ENCODE measurements at regions of chr1 and their contacts with region 1.

Region 1: DNA sequence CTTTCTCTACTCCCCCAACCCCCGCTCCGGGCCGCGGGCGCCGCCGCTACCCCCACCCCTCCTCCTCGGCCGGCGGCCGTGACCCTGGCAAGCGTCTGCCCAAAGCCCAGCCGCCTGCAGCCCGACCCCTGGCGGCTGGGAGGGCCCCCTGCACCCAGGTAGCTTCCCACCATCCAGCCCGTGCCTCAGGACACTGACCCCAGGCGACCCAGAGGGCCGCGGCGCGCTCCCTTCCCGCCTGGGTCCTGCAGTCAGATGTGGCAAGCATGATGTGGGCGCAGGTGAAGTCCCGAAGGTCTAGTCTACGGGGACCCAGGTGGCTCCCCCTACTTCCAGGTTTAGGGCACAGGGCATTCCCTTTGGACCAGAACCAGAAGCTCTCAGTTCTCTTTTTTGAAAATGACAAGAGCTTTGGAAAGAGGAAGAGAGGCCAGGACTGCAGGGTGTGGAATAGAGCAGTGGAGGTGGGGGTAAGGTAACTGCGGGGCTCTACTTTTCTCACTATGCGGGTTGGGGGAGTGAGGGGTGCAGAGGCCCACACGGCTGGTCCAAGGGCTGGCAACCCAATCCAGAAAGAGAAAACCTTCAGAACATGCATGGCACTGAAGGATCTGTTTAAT is at the start of gene DENND4B:
- DNase-seq: peak; percentile 88
- H3K4me3 Mint-ChIP-seq: peak within 1 kb of the TSS; percentile 90
- H3K27ac Mint-ChIP-seq: peak within 1 kb of the TSS; percentile 88
- H3K4me1 Mint-ChIP-seq: peaks cover 21% of the 10 kb centered on the region
- H3K27me3 Mint-ChIP-seq: no peaks in the 10 kb centered on the region
- CTCF ChIP-seq: peak; percentile 98
- total RNA-seq, gene DENND4B: 59.6 and 79.1 TPM in 2 replicates

Region 2: DNA sequence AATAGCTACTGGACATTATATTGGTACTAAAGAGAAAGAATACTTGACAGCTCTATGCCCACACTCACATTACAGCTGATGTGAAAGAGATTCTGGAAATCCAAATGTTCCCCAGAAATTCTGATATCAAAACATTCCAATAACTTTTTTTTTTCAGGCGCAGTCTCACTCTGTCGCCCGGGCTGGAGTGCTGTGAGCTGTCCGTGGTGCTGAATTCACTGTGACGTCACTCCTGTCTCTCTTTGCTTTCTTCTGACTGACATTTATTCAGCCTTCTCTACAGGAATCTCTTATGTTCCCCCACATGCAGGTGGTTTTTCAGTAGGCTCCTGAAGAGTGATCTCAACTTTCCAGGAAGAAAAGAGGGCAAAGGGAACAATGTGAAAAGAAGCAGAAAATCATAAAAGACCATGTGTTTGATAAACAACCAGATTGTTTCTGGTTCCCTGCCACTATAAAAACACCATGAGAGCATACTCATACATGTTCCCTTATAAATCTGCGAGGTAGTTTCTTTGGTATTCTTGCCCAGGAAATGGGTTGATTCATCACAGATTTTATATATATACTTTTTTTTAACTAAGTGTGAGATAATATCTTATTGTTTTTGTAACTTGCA is 524.2 kb before region 1 on chr1:
- CTCF ChIA-PET with region 1: no interaction called
- POLR2A ChIA-PET with region 1: no interaction called
- intact Hi-C with region 1: no loop called
- DNase-seq: peak; percentile 84
- H3K4me3 Mint-ChIP-seq: no peak overlapping the region
- H3K27ac Mint-ChIP-seq: no peak overlapping the region
- H3K4me1 Mint-ChIP-seq: no peaks in the 10 kb centered on the region
- H3K27me3 Mint-ChIP-seq: peaks cover 86% of the 10 kb centered on the region
- CTCF ChIP-seq: no peak

Region 3: DNA sequence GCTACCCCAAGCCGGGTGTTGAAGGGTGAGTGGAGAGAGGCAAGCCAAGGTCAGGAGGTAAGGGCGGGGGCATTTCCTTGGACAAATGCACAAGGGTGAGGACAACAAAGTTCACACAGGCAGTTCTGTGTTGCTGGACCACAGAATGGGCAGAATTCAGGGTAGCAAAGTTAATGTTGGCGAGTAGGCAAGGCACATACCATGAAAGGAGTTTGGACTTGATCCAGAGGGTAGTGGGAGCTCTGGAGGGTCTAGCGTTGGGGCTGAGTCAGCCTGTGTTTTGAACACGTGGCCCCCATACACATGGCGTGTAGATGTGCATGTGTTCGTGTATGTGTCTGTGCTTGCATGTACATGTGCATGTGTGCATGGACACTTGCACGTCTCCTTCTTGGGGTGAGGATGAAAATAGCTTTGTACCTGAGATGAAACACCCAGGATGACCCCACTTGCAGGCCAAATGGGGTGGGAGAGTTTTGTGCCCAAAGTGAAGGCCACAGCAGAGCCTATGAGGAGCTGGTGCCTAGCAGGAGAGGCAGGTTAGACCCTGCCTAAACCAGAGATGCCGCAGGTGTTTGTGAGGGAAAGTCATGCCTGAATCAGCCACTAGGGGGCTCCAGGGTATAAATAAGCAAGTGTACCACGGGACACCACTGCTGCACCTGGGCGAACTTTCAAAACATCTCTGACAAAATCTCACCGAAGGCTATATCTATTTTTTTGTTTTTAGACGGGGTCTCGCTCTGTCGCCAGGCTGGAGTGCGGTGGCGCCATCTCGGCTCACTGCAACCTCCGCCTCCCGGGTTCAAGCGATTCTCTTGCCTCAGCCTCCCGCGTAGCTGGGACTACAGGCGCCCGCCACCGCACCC is 149.7 kb before region 1 on chr1:
- CTCF ChIA-PET with region 1: interaction called, 21 read pairs
- POLR2A ChIA-PET with region 1: interaction called, 7 read pairs
- intact Hi-C with region 1: loop called (anchors 1 kb)
- DNase-seq: peak; percentile 88
- H3K4me3 Mint-ChIP-seq: no peak overlapping the region
- H3K27ac Mint-ChIP-seq: no peak overlapping the region
- H3K4me1 Mint-ChIP-seq: peaks cover 15% of the 10 kb centered on the region
- H3K27me3 Mint-ChIP-seq: no peaks in the 10 kb centered on the region
- CTCF ChIP-seq: peak; percentile 93

Region 4: GRCh38 chr1:153816283-153816889 is 130.3 kb before region 1 on chr1:
- CTCF ChIA-PET with region 1: interaction called, 9 read pairs
- POLR2A ChIA-PET with region 1: interaction called, 11 read pairs
- intact Hi-C with region 1: loop called (anchors 1 kb)
- DNase-seq: no peak
- H3K4me3 Mint-ChIP-seq: no peak overlapping the region
- H3K27ac Mint-ChIP-seq: peak overlapping the region; percentile 2
- H3K4me1 Mint-ChIP-seq: no peaks in the 10 kb centered on the region
- H3K27me3 Mint-ChIP-seq: no peaks in the 10 kb centered on the region
- CTCF ChIP-seq: no peak

Region 5: GRCh38 chr1:153936011-153936802 is 10.5 kb before region 1 on chr1:
- CTCF ChIA-PET with region 1: interaction called, 4 read pairs
- POLR2A ChIA-PET with region 1: interaction called, 15 read pairs
- intact Hi-C with region 1: no loop called
- DNase-seq: no peak
- H3K4me3 Mint-ChIP-seq: no peak overlapping the region
- H3K27ac Mint-ChIP-seq: no peak overlapping the region
- H3K4me1 Mint-ChIP-seq: no peaks in the 10 kb centered on the region
- H3K27me3 Mint-ChIP-seq: no peaks in the 10 kb centered on the region
- CTCF ChIP-seq: no peak

Region 6: GRCh38 chr1:153967082-153968000 is 20.6 kb after region 1 on chr1 and contains the start of gene CREB3L4:
- CTCF ChIA-PET with region 1: interaction called, 13 read pairs
- POLR2A ChIA-PET with region 1: interaction called, 430 read pairs
- intact Hi-C with region 1: no loop called
- DNase-seq: peak; percentile 100
- H3K4me3 Mint-ChIP-seq: peak within 1 kb of the TSS; percentile 95
- H3K27ac Mint-ChIP-seq: peak within 1 kb of the TSS; percentile 94
- H3K4me1 Mint-ChIP-seq: peaks cover 40% of the 10 kb centered on the region
- H3K27me3 Mint-ChIP-seq: no peaks in the 10 kb centered on the region
- CTCF ChIP-seq: peak; percentile 32
- total RNA-seq, gene CREB3L4: 14.7 and 17.6 TPM in 2 replicates